Activated CD4-positive, alpha-beta memory T cell treated with anti-CD3 and anti-CD28 coated beads for 36 hours (primary cell): ENCODE measurements at regions of chrX and their contacts with region 1.

Region 1: GRCh38 chrX:130268500-130269170 is at the start of gene ZNF280C:
- DNase-seq: peak; percentile 95
- H3K4me3 Mint-ChIP-seq: peak within 1 kb of the TSS; percentile 85
- H3K27ac Mint-ChIP-seq: peak within 1 kb of the TSS; percentile 74
- H3K4me1 Mint-ChIP-seq: peaks cover 15% of the 10 kb centered on the region
- H3K27me3 Mint-ChIP-seq: no peaks in the 10 kb centered on the region
- total RNA-seq, gene ZNF280C: 5.3 to 5.8 TPM

Region 2: DNA sequence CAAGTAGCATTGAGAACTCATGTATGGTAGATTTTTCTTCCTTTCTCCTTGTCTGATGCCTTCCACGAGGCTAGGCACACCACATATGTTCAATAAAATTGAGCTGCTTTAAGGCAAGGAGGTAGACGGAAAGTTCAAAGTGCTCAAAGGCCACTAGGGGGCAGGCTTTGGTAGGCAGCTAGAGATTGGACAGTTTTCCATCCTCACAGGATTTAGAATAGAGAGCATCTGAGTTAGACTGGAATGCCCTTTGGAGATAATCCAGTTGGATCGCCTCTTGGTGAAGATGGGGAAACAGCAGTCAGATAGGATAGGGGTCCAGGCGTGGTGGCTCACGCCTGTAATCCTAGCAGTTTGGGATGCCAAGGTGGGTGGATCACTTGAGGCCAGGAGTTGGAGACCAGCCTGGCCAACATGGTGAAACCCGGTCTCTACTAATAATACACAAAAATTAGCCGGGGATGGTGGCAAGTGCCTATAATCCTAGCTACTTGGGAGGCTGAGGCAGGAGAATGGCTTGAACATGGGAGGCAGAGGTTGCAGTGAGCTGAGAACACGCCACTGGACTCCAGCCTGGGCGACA is 188.7 kb before region 1 on chrX:
- CTCF ChIA-PET with region 1: no interaction called
- POLR2A ChIA-PET with region 1: no interaction called
- intact Hi-C with region 1: loop called (anchors 2 kb)
- DNase-seq: peak; percentile 67
- H3K4me3 Mint-ChIP-seq: no peak overlapping the region
- H3K27ac Mint-ChIP-seq: peak overlapping the region; percentile 50
- H3K4me1 Mint-ChIP-seq: peaks cover 42% of the 10 kb centered on the region
- H3K27me3 Mint-ChIP-seq: no peaks in the 10 kb centered on the region

Region 3: DNA sequence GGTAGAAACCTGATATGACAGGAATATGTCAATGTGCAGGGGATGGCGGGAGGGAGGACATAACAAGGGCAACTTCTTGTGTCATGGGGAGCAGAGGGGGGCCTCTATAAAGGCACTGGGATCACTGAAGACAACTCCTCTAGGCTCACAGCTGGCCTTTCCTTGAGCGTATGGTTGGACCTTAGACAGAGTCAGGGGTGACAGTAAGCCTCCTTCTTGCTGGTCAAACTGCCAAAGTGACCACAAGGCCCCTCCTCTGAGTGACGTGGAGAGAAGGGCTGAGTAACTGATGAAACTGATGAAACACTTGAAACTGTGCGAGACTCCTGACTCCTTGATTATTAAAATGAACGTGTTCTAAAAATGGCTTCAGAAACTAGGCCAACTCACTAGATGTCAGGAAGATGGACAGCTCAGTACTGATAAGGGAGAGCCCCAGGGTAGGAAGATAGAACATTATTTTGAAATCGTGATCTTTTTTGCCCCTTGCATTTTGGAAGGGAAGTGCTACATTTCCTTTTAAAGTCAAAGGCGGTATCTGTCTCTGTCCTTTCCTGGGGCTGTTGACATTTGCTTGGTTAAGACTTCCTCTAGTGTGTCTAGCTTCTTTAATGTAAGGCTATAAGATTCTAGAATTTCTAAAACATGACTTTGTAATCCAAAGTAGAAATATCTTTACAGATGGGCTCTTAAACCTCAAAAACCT is 95.3 kb before region 1 on chrX:
- CTCF ChIA-PET with region 1: interaction called, 3 read pairs
- POLR2A ChIA-PET with region 1: no interaction called
- intact Hi-C with region 1: loop called (anchors 2 kb)
- DNase-seq: peak; percentile 76
- H3K4me3 Mint-ChIP-seq: peak overlapping the region; percentile 89
- H3K27ac Mint-ChIP-seq: peak overlapping the region; percentile 95
- H3K4me1 Mint-ChIP-seq: peaks cover 41% of the 10 kb centered on the region
- H3K27me3 Mint-ChIP-seq: no peaks in the 10 kb centered on the region

Region 4: DNA sequence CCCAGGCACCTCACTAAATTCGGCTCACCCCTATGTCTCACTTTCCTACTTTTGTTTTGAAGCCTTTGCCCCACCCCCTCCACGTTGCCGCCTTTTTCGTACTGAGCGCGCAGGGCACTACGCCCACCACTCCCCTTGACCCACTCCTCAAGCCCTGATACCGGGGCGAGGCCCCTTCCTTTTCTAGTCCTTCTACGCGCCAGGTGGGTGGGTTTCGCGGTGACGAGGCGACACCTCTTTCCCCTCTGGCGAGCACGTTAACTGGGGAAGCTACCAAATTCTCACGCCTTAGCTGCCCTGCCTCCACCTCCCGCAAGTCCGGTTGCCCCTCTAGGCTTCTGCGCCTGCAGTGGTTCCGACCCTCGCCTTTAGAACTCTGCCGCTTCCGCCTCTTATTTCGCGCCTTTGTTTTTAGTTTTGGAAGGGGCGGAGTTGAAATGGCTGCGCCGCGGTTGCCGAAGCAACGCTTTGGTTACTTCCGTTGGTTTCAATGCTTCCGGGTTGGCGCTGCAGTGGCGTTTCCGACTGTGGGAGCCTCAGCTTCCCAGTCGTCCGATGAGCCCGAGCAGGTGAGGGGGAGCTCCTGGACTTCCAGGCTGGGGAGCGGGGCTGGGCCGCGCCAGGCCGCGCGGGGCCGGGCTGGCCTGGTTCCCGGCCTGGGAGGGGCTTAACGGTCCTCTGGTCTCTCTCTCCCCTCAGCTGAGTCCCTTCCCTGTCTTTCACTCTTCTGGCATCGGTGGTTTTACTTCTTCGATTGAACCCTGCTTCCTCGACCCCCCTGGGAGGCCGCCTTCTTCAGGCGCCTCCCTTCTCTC is 71.0 kb after region 1 on chrX and contains the start of gene SLC25A14:
- CTCF ChIA-PET with region 1: no interaction called
- POLR2A ChIA-PET with region 1: interaction called, 3 read pairs
- intact Hi-C with region 1: loop called (anchors 1 kb)
- DNase-seq: peak; percentile 82
- H3K4me3 Mint-ChIP-seq: peak within 1 kb of the TSS; percentile 87
- H3K27ac Mint-ChIP-seq: peak within 1 kb of the TSS; percentile 88
- H3K4me1 Mint-ChIP-seq: peaks cover 10% of the 10 kb centered on the region
- H3K27me3 Mint-ChIP-seq: no peaks in the 10 kb centered on the region
- total RNA-seq, gene SLC25A14: 12.1 to 13.2 TPM

Region 5: DNA sequence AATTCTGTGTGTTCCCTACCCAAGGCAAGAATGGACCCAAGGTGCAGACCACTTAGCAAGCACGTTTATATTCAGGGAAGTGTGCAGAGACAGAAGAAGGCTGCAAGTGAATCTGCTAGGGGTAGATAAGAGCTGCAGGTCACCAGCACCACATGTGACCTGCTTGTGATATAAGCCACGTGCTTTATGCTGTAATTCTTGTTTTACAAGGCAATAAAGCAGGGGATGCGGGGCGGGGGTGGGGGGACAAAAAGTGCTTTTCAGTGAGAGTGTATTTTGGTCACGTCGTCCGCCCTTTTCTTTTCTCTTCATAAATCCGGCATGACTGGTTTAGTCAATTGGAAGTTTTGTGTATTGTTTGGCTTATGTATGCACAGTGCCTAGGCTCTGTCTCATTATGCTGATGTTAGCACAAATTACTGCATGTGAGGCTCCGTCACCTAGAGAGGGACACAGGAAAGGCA is 325.9 kb after region 1 on chrX:
- CTCF ChIA-PET with region 1: no interaction called
- POLR2A ChIA-PET with region 1: no interaction called
- intact Hi-C with region 1: no loop called
- DNase-seq: no peak
- H3K4me3 Mint-ChIP-seq: no peak overlapping the region
- H3K27ac Mint-ChIP-seq: no peak overlapping the region
- H3K4me1 Mint-ChIP-seq: no peaks in the 10 kb centered on the region
- H3K27me3 Mint-ChIP-seq: peaks cover 3% of the 10 kb centered on the region

Region 6: DNA sequence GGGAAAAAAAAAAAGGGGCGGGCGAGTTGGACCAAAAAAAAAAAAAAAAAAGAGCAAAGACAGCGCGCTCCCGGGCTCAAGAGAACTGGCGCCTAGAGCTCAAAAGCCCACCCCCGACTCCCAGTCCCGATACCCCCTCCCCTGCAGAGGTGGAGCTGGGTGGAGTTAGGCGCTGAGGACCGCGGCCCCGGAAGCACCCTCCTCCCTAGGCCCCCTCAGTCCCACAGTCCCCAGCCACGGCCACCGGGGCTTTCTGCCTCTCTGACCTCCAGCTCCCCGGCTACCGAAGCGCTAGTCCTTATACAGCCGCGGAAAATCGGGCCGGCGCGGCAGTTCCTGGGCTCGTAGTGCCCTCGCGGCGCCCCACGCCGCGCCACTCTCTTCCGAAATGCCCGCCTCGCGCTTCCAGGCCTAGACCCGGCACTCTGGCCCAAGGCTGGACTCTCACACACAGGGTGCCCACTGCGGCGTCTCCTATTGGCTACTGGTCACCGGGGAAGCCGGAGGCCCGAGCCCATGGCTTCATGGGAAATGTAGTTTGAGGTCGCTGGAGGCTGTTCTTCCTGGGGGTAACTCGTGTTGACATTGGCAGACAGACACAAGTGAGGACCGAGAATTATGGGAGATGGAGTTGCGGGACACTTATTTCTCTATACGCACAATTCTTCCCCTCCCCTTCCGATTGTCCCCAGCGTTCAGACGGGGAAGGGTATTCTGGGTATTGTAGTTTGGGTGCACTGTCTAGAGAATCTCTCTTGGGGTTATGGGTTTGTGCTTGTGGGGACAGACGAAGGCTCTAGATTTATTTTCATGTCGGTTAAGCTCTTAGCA is 634.4 kb after region 1 on chrX and contains the start of gene ENOX2:
- CTCF ChIA-PET with region 1: no interaction called
- POLR2A ChIA-PET with region 1: no interaction called
- intact Hi-C with region 1: loop called (anchors 1 kb)
- DNase-seq: peak; percentile 87
- H3K4me3 Mint-ChIP-seq: no peak within 1 kb of the TSS
- H3K27ac Mint-ChIP-seq: no peak within 1 kb of the TSS
- H3K4me1 Mint-ChIP-seq: peaks cover 6% of the 10 kb centered on the region
- H3K27me3 Mint-ChIP-seq: no peaks in the 10 kb centered on the region
- total RNA-seq, gene ENOX2: 12.3 to 13.3 TPM